Right ventricle myocardium inferior (tissue), 1 donor: ENCODE measurements at regions of chr17 and their contacts with region 1.

Region 1: GRCh38 chr17:58447039-58447975 is 30.0 kb upstream of the RNF43 start:
- DNase-seq: peak; percentile 75
- ATAC-seq: peak; percentile 81

Region 2: DNA sequence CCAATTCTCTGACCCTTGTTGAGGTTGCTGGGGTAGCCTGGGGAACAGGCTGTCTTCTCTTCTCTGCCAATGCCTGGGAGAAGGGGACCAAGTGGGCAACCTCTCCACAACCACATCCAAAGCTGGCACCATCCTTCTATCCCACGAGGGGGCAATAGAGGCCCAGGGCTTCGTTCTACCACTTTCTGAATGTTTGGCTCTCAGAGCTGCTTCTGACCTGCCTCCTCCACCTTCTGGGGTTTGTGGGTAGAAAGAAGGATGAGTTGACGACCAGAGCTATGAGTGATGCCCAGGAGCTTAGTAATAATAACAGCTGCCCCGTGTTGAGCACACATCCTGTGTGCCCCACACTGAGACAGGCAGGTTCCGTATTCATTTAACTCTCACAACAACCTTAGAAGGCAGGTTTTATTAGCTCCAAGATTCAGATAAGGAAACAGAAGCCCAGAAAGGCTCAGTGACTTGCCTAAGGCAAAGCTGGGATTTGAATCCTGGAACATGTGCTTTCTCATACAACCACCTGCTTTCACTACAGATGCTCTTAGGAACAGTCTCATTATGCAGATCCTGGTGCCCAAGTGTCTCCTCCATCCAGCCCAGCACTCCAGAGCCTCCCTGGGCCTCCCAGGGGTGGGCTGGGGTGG is 129.8 kb before region 1 on chr17:
- intact Hi-C with region 1: loop called (anchors 5 kb)
- DNase-seq: no peak
- ATAC-seq: no peak